H1 (cell line): ENCODE measurements at regions of chr6 and their contacts with region 1.

Region 1: DNA sequence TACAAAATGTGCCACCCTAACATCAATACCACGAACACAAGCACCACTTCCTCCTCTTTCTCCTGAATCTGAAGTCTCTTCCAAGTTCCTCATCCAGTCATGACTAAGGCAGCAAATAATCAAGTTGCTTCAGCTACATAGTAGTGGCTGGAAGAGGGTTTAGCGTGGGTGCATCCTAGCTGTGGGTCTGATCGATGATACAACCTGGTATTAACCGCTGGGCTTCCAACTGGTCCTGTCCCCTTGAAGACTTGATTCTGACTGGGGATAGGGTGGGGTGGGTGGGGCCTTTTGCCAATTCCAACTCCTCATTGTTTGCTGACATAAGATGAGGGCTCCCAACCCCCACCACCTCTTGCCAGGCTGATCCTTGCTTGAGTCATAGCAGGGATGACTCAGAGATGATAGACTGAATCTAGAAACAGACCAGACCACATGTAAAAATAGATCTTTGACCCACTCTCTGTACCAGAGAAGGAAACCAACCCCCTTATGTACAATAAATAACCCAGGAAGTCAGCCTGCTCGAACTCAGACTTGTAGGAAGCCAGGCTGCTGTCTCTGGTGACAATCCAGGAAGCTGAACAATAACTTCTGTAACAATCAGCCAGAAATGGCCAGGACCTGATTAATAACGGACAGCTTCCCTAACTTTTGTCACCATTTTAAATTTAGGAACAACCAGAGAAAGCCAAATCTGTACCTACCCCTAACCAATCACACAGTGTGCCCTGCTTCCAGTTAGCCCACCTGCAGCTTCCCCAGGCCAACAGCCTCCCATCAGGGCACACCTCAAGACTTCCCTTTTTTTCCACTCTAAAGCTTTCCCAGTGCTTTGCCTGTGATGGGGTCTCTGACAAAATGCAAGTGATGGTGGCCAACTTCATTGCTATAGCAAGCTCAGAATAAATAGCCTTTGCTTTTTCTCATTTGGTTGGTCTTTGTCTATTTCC is 68.9 kb upstream of the FAM184A start:
- DNase-seq: peak in 1 of 2 experiments; percentile 41
- H3K4me3 ChIP-seq: no peak overlapping the region
- H3K27ac ChIP-seq: no peak overlapping the region
- H3K4me1 ChIP-seq: 0 out of 7 replicates have a peak, but pooled peaks cover 0 to 2% (median 0%) of the 10 kb centered on the region in 4 experiments
- H3K27me3 ChIP-seq: no peaks in the 10 kb centered on the region
- CTCF ChIP-seq: no peak
- EP300 ChIP-seq: no peak
- POLR2A ChIP-seq: no peak
- RAD21 ChIP-seq: no peak

Region 2: GRCh38 chr6:119129148-119129967 is 18.0 kb before region 1 on chr6:
- CTCF ChIA-PET with region 1: interaction called, 25 read pairs
- POLR2A ChIA-PET with region 1: no interaction called
- DNase-seq: peak in 1 of 2 experiments; percentile 63
- H3K4me3 ChIP-seq: no peak overlapping the region
- H3K27ac ChIP-seq: no peak overlapping the region
- H3K4me1 ChIP-seq: peaks cover 0 to 4% (median 3%) of the 10 kb centered on the region in 4 experiments; a peak in 5 of 7 replicates
- H3K27me3 ChIP-seq: no peaks in the 10 kb centered on the region
- CTCF ChIP-seq: peak in 2 of 3 experiments; percentile 46 to 75; a peak in 2 of 4 replicates
- EP300 ChIP-seq: no peak
- POLR2A ChIP-seq: no peak
- RAD21 ChIP-seq: peak; percentile 65 to 70

Region 3: DNA sequence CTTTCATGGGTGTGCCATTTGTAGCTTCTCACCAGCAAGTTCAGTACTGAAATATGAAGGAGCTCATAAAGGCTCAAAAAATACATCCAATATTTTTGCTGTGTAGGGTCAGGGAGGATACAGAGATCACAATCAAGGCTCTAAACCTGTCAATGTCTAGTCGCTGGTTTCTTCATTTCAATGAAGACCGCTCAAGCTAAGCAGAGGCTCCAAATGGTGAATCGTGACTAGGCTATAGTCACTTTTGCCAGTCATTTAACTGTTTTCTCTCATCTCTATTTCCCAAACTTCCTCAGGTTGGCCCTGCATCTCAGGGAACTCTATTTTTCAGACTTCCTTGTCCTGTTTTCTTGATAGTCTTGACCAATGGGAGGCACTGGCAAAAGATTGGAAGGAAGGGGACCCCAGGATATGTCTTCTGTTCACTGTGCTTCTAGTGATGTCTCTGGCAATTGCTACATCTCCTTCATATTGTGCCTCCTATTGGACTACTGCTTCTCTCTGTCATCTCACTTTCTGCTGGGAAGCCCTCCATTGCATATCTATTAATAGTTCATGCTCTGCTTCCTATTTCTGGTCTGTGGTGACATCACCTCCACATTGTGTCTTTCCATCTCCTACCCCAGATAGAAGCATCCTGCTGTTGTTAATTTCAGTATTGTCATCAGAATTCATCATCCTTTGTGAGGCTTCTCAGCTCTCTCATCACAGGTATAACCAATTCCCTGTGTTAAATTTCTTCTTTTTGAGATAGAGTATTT is 18.8 kb after region 1 on chr6:
- CTCF ChIA-PET with region 1: interaction called, 18 read pairs
- POLR2A ChIA-PET with region 1: no interaction called
- DNase-seq: no peak
- H3K4me3 ChIP-seq: no peak overlapping the region
- H3K27ac ChIP-seq: no peak overlapping the region
- H3K4me1 ChIP-seq: no peaks in the 10 kb centered on the region
- H3K27me3 ChIP-seq: no peaks in the 10 kb centered on the region
- CTCF ChIP-seq: no peak
- EP300 ChIP-seq: no peak
- POLR2A ChIP-seq: no peak
- RAD21 ChIP-seq: no peak

Region 4: DNA sequence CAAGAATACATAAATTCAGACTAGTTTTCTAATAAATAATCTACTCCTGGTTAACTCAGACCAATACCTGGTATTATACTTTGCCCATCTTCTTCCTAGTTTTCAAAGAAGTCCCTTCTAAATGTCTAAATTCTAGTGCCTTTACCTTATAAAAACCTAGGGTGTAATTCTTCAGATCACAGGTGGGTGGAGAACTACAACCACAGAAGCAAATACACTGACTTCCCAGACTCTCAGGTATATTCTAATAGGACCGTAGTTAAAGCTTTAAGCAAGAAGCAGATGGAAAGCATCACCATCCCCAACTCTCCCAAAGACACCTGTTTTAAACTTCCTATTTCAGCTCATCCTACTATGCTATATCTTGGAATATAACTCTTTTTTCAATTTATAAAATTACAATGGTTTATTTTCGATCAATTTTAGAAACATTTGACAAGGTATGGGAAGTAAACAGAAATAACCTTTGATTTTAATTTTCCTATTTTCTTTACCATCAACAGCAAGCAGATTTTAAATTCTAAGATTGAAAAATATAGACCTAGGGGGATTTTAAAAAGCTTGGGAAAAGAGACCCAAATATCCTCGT is 186.4 kb after region 1 on chr6:
- CTCF ChIA-PET with region 1: interaction called, 14 read pairs
- POLR2A ChIA-PET with region 1: no interaction called
- DNase-seq: no peak
- H3K4me3 ChIP-seq: no peak overlapping the region
- H3K27ac ChIP-seq: no peak overlapping the region
- H3K4me1 ChIP-seq: peaks cover 0 to 3% (median 2%) of the 10 kb centered on the region in 4 experiments; a peak in 2 of 7 replicates
- H3K27me3 ChIP-seq: no peaks in the 10 kb centered on the region
- CTCF ChIP-seq: peak in 2 of 3 experiments; percentile 50 to 57; a peak in 2 of 4 replicates
- EP300 ChIP-seq: no peak
- POLR2A ChIP-seq: no peak
- RAD21 ChIP-seq: peak; percentile 85 to 87

Region 5: GRCh38 chr6:119742188-119742803 is 594.9 kb after region 1 on chr6:
- CTCF ChIA-PET with region 1: interaction called, 11 read pairs
- POLR2A ChIA-PET with region 1: no interaction called
- DNase-seq: peak in 1 of 2 experiments; percentile 91
- H3K4me3 ChIP-seq: no peak overlapping the region
- H3K27ac ChIP-seq: no peak overlapping the region
- H3K4me1 ChIP-seq: no peaks in the 10 kb centered on the region
- H3K27me3 ChIP-seq: no peaks in the 10 kb centered on the region
- CTCF ChIP-seq: peak; percentile 74 to 84 (median 78)
- EP300 ChIP-seq: no peak
- POLR2A ChIP-seq: no peak
- RAD21 ChIP-seq: peak; percentile 95 to 97